ENCODE measurements at regions of chr6 and their contacts with region 1.

Region 1: GRCh38 chr6:144215932-144216667 is 65.8 kb downstream of the STX11 start:
- DNase-seq: peak; percentile 88
- H3K4me3 Mint-ChIP-seq: peak overlapping the region; percentile 93
- H3K27ac Mint-ChIP-seq: peak overlapping the region; percentile 95
- H3K4me1 Mint-ChIP-seq: peaks cover 37% of the 10 kb centered on the region
- H3K27me3 Mint-ChIP-seq: peaks cover 6% of the 10 kb centered on the region

Region 2: GRCh38 chr6:142885182-142885867 is 1330.8 kb before region 1 on chr6:
- intact Hi-C with region 1: loop called (anchors 5 kb)
- DNase-seq: peak; percentile 45
- H3K4me3 Mint-ChIP-seq: peak overlapping the region; percentile 96
- H3K27ac Mint-ChIP-seq: peak overlapping the region; percentile 99
- H3K4me1 Mint-ChIP-seq: peaks cover 92% of the 10 kb centered on the region
- H3K27me3 Mint-ChIP-seq: no peaks in the 10 kb centered on the region

Region 3: GRCh38 chr6:143940011-143940597 is 276.0 kb before region 1 on chr6:
- intact Hi-C with region 1: loop called (anchors 1 kb)
- DNase-seq: peak; percentile 26
- H3K4me3 Mint-ChIP-seq: no peak overlapping the region
- H3K27ac Mint-ChIP-seq: no peak overlapping the region
- H3K4me1 Mint-ChIP-seq: peaks cover 9% of the 10 kb centered on the region
- H3K27me3 Mint-ChIP-seq: peaks cover 3% of the 10 kb centered on the region

Region 4: GRCh38 chr6:144104898-144105487 is 111.1 kb before region 1 on chr6:
- intact Hi-C with region 1: loop called (anchors 1 kb)
- DNase-seq: peak; percentile 25
- H3K4me3 Mint-ChIP-seq: no peak overlapping the region
- H3K27ac Mint-ChIP-seq: no peak overlapping the region
- H3K4me1 Mint-ChIP-seq: peaks cover 13% of the 10 kb centered on the region
- H3K27me3 Mint-ChIP-seq: peaks cover 7% of the 10 kb centered on the region

Region 5: DNA sequence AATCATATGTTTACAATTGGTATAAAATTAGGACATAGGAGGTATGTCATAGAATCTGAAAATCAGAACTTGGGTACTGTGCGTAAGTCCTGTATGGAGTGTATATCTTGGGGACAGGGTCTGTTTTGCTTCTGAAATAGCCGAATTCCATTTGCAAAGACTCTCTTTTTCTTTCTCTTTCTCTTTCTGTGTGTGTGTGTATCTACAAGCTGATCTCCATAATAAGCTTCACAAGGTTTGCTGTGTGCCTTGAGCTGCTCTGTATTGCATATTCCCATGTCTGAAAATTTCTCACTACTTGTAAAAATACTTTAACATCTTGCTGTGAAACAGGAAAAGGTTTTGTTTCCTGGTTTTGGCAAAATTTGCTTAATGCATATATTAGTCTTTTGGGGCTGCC is 36.3 kb before region 1 on chr6:
- intact Hi-C with region 1: loop called (anchors 1 kb)
- DNase-seq: no peak
- H3K4me3 Mint-ChIP-seq: no peak overlapping the region
- H3K27ac Mint-ChIP-seq: no peak overlapping the region
- H3K4me1 Mint-ChIP-seq: peaks cover 47% of the 10 kb centered on the region
- H3K27me3 Mint-ChIP-seq: no peaks in the 10 kb centered on the region

Region 6: GRCh38 chr6:144343701-144344428 is 127.8 kb after region 1 on chr6:
- intact Hi-C with region 1: loop called (anchors 1 kb)
- DNase-seq: peak; percentile 36
- H3K4me3 Mint-ChIP-seq: peak overlapping the region; percentile 96
- H3K27ac Mint-ChIP-seq: peak overlapping the region; percentile 98
- H3K4me1 Mint-ChIP-seq: peaks cover 65% of the 10 kb centered on the region
- H3K27me3 Mint-ChIP-seq: no peaks in the 10 kb centered on the region

Region 7: DNA sequence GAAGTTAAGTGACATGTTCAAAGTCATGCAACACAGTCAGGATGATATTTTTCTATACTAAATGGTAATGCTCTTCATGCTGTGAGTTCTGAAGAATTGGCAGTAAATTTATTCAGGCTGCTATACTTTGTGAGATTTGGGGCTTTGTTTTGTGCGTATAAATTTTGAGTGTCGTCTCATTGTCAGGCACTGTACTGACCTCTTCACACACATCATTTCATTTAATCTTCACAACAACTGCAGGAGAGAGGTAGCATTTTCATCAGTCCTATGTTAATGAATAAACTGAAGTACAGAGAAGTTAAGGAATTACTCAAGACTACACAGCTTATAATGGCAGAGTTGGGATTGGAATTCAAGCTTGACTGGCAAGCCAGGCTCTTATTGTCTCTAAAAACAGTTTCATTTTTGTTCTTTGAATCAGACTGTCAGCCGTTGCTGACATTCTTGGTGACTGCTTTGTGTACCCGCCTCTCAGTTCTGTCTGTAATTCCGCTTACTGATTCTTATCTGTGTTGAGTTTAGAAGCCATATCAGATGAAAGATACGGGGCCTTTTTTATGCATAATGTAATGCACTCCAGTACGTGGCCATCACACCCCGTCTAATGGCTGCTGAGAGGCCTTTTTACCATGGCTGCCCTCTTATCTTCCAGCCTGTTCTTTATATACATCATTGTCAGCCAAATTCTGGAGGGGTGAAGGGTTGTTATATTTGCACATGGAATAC is 343.9 kb after region 1 on chr6:
- intact Hi-C with region 1: loop called (anchors 1 kb)
- DNase-seq: peak; percentile 53
- H3K4me3 Mint-ChIP-seq: peak overlapping the region; percentile 61
- H3K27ac Mint-ChIP-seq: peak overlapping the region; percentile 86
- H3K4me1 Mint-ChIP-seq: peaks cover 31% of the 10 kb centered on the region
- H3K27me3 Mint-ChIP-seq: no peaks in the 10 kb centered on the region

Measured in activated T-helper 1 cell treated with anti-CD3 and anti-CD28 coated beads, Interleukin-12 subunit alpha, Interleukin-12 subunit beta, Interleukin-2, Interleukin-4 antibody, amounts not matched to agents 30 ng/mL and 10 ng/mL and 1 ng/mL, durations not matched to agents 14 hours and 24 hours and 36 hours (primary cell).